Mucosa of descending colon (tissue), 3 donors: ENCODE measurements at regions of chr10 and their contacts with region 1.

Region 1: DNA sequence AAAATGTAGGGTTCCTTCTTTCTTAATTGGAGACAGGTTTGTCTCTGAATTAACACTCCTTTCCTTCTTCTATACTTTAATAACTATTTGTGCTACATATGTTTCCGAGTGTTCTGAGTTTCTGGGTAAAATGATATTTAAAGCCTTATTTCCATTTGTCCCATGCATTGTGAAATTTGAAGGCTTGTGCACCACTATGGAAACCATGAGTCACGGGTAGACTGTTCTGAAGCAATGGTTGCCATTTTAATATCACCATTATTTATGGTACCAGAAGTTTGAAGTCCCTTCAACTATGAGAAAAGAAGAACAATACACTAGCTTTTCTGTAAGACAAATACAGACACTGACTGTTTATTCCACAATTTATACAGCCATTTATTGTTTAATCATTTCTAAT is 44.7 kb upstream of the ZEB1 start:
- DNase-seq: no peak
- ATAC-seq: no peak
- H3K4me3 ChIP-seq: no peak overlapping the region
- H3K4me1 ChIP-seq: no peaks in the 10 kb centered on the region
- CTCF ChIP-seq: no peak

Region 2: DNA sequence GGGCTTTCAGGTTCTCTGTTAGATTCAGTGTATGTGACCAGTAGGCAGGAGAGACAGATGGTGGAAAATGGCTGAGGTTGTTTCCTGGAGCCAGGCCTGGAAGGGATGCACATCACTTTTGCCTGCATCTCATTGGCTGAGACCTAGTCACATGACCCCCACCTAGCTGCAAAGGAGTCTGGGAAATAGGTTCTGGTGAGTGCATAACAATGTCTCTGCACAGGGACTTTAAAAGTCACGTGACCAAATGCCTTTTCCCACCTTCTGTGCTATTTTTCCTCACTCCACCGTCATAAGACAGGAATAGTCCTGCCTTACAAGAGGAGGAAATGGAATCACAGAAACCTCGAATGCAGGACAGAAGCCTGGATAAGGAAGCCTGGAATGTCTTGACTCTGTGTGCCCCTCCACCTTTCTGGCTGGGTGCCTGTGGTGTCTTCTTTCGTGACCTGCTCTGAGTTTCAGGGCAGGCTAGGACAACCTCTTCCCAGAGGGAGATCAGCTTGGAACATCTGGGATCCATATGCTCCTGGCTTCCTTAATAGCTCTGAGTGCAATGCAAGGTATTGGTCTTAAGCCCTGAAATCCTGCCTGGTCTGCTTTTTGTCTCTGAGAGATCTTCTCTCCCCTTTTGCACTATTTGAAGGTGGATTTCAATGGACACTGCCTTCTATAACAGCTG is 102.8 kb before region 1 on chr10:
- intact Hi-C with region 1: loop called in 1 of 2 experiments (anchors 10 kb)
- DNase-seq: no peak
- ATAC-seq: no peak
- H3K4me3 ChIP-seq: no peak overlapping the region
- H3K4me1 ChIP-seq: no peaks in the 10 kb centered on the region
- CTCF ChIP-seq: no peak

Region 3: GRCh38 chr10:31362023-31362641 is 87.8 kb after region 1 on chr10:
- intact Hi-C with region 1: no loop called
- DNase-seq: no peak
- ATAC-seq: no peak
- H3K4me3 ChIP-seq: no peak overlapping the region
- H3K4me1 ChIP-seq: no peaks in the 10 kb centered on the region
- CTCF ChIP-seq: no peak

Region 4: DNA sequence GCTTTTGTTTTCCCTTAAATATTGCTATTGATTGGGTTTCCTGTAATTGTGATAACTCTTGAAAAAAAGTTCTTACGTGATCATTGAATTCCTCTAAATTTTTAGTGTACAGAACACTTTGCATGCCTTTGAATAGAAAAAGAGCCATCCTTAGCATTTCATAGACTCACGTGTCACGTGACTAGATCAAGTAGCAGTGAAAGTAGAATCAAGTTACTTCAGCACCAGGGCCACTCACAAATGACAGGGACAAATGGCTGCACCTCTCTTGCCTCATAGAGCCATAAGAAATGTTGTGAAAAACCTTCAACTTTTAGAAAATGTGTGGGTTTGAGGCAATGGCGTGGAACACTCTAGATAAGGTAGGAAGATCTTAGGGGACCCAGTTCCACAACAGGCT is 248.5 kb after region 1 on chr10:
- intact Hi-C with region 1: no loop called
- DNase-seq: no peak
- ATAC-seq: no peak
- H3K4me3 ChIP-seq: no peak overlapping the region
- H3K4me1 ChIP-seq: no peaks in the 10 kb centered on the region
- CTCF ChIP-seq: no peak